ENCODE measurements at regions of chr1 and their contacts with region 1.

Region 1: DNA sequence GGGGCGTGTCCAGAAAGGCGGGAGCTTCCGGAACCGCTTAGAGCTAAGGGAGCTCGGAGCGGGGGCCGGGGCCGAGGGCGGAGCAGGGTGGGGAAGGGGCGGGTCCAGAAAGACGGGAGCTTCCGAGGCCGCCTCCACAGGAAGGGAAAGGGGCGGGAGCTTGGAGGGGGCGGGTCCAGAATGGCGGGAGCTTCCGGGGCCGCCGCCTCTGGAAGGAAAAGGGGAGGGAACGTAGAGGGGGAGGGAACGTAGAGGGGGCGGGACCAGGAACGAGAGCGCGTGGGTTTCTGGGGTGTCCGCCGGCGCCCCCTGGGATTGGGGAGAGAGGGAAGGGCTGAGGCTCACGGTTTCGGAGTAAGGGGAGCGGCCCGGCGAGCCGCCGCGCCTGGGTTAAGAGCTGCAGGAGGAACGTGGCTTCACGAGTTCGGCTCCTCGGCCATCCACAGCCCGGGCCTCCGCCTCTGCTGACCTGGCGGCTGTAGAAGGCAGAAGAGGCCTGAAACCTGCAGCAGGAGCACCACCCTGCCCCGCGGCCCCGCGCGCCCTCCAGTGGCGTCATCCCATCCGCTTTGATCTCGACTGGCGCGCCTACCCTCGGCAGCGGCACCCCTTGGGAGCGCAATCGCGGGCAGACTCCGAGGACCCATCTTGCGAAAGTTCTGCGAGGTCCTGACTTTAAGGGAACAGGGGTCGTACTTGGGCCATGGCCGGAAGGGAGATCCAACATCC is 22.9 kb upstream of the HPDL start:
- DNase-seq: peak; percentile 98
- H3K4me3 ChIP-seq: peak overlapping the region; percentile 51 to 60 (median 54)
- H3K27ac ChIP-seq: peak overlapping the region; percentile 67
- H3K4me1 ChIP-seq: peaks cover 14% of the 10 kb centered on the region
- H3K27me3 ChIP-seq: no peaks in the 10 kb centered on the region
- CTCF ChIP-seq: peak; percentile 54 to 74
- POLR2A ChIP-seq: peak; percentile 74

Region 2: GRCh38 chr1:44799770-44800584 is 503.8 kb before region 1 on chr1 and contains the start of gene PLK3:
- CTCF ChIA-PET with region 1: no interaction called
- POLR2A ChIA-PET with region 1: interaction called, 9 read pairs
- dilution Hi-C with region 1: no loop called
- intact Hi-C with region 1: loop called (anchors 5 kb)
- DNase-seq: peak; percentile 98
- H3K4me3 ChIP-seq: peak within 1 kb of the TSS; percentile 68 to 75 (median 69)
- H3K27ac ChIP-seq: peak within 1 kb of the TSS; percentile 87
- H3K4me1 ChIP-seq: peaks cover 22% of the 10 kb centered on the region
- H3K27me3 ChIP-seq: no peaks in the 10 kb centered on the region
- CTCF ChIP-seq: peak; percentile 93 to 96
- POLR2A ChIP-seq: peak; percentile 100
- total RNA-seq, gene PLK3: 55.0 and 60.0 TPM in 2 replicates

Region 3: GRCh38 chr1:44835738-44836675 is 467.7 kb before region 1 on chr1:
- CTCF ChIA-PET with region 1: interaction called, 6 read pairs
- POLR2A ChIA-PET with region 1: no interaction called
- dilution Hi-C with region 1: no loop called
- intact Hi-C with region 1: loop called (anchors 1 kb)
- DNase-seq: peak; percentile 88
- H3K4me3 ChIP-seq: no peak overlapping the region
- H3K27ac ChIP-seq: no peak overlapping the region
- H3K4me1 ChIP-seq: no peaks in the 10 kb centered on the region
- H3K27me3 ChIP-seq: no peaks in the 10 kb centered on the region
- CTCF ChIP-seq: peak; percentile 85 to 93
- POLR2A ChIP-seq: no peak

Region 4: DNA sequence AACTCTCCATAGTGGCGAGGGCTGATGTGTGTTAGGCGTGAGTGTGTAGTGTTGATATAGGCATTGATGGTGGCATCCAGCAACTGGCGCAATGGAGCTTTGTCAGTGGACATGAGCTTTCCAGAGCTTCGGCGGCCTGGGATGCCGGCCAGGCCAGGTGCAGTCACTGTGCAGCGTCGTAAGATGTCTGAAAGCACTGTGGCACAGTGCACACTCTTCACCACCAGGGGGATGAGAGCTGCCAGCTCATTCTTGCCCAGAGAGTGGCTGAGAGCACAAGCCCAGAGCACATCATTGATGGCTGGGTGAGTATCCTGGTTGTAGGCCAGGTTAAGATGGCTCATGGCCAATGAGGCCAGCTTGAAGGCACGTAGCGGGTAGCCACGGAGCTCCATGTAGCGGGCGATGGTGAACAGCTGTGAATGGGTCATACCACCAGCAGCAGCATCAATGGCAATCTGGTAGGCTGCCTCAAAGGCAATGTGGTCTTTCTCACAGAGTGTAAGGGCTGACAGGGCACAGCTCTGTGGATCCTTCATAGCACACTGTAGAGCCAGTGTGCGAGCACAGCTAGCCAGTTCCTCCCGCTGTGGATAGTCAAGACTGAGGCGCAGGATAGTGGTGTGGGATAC is 285.0 kb before region 1 on chr1:
- CTCF ChIA-PET with region 1: interaction called, 556 read pairs
- POLR2A ChIA-PET with region 1: no interaction called
- dilution Hi-C with region 1: no loop called
- intact Hi-C with region 1: loop called (anchors 1 kb)
- DNase-seq: peak; percentile 63
- H3K4me3 ChIP-seq: no peak overlapping the region
- H3K27ac ChIP-seq: no peak overlapping the region
- H3K4me1 ChIP-seq: peaks cover 3% of the 10 kb centered on the region
- H3K27me3 ChIP-seq: no peaks in the 10 kb centered on the region
- CTCF ChIP-seq: peak; percentile 78 to 93
- POLR2A ChIP-seq: no peak

Region 5: GRCh38 chr1:45266151-45266801 is 37.5 kb before region 1 on chr1:
- CTCF ChIA-PET with region 1: interaction called, 7 read pairs
- POLR2A ChIA-PET with region 1: no interaction called
- dilution Hi-C with region 1: no loop called
- intact Hi-C with region 1: loop called (anchors 1 kb)
- DNase-seq: peak; percentile 97
- H3K4me3 ChIP-seq: no peak overlapping the region
- H3K27ac ChIP-seq: peak overlapping the region; percentile 95
- H3K4me1 ChIP-seq: peaks cover 26% of the 10 kb centered on the region
- H3K27me3 ChIP-seq: no peaks in the 10 kb centered on the region
- CTCF ChIP-seq: no peak
- POLR2A ChIP-seq: peak; percentile 70

Region 6: GRCh38 chr1:45339789-45340570 is 36.2 kb after region 1 on chr1 and contains the starts of genes MUTYH and TOE1:
- CTCF ChIA-PET with region 1: interaction called, 29 read pairs
- POLR2A ChIA-PET with region 1: interaction called, 33 read pairs
- dilution Hi-C with region 1: no loop called
- intact Hi-C with region 1: loop called (anchors 1 kb)
- DNase-seq: peak; percentile 94
- H3K4me3 ChIP-seq: peak within 1 kb of the TSS; percentile 48 to 82 (median 56)
- H3K27ac ChIP-seq: peak within 1 kb of the TSS; percentile 85
- H3K4me1 ChIP-seq: peaks cover 22% of the 10 kb centered on the region
- H3K27me3 ChIP-seq: no peaks in the 10 kb centered on the region
- CTCF ChIP-seq: no peak
- POLR2A ChIP-seq: peak; percentile 72
- total RNA-seq, gene MUTYH: 14.3 and 16.6 TPM in 2 replicates
- total RNA-seq, gene TOE1: 15.8 and 16.3 TPM in 2 replicates

Region 7: DNA sequence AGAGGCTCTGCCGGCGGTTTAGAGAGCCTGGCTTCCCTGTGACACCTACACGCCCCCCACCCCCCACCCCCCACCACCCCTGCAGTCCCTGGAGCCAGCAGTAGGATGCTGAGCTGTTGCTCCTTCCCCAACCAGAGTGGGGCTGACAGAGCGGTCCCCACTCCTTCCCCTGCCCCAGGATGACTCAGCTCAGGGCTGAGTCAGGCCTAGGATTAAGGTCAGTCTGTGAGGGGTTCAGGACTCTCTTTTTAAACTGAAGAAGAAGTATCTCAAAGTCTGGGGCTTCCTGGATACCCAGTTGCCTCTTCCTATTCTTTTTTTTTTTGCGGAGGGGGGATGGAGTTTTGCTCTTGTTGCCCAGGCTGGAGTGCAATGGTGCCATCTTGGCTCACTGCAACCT is 1205.0 kb after region 1 on chr1:
- CTCF ChIA-PET with region 1: no interaction called
- POLR2A ChIA-PET with region 1: no interaction called
- dilution Hi-C with region 1: no loop called
- intact Hi-C with region 1: no loop called
- DNase-seq: no peak
- H3K4me3 ChIP-seq: no peak overlapping the region
- H3K27ac ChIP-seq: no peak overlapping the region
- H3K4me1 ChIP-seq: no peaks in the 10 kb centered on the region
- H3K27me3 ChIP-seq: peaks cover 6 to 13% of the 10 kb centered on the region in 2 experiments
- CTCF ChIP-seq: no peak
- POLR2A ChIP-seq: no peak